ENCODE measurements at regions of chr6 and their contacts with region 1.

Region 1: DNA sequence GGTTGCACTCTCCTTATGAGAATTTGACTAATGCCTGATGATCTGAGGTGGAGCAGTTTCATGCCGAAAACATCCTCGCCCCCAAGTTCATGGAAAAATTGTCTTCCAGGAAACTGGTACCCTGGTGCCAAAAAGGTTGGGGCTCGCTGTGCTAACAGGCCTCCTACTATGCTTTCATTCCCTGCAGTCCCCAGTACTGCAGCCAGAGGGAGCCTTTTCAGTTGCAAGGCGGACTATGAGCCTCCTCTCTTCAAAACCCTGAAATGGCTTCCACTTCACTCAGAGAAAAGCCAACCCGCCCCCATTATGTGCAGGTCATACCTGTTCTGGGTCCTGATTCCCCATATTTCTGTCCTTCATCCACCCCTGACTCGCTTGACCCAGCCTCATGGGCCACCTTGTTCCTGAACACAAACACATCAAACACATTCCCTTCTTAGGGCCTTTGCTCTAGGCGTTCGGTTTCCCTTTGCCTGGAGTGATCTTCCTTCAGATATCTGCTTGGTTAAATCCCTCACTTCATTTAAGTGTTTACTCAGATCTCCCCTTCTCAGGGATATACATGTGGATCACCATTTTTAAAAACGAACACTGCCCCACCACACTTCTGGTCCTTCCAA is 173.7 kb downstream of the PHACTR1 start:
- DNase-seq: peak in 1 of 2 donors; percentile 14
- ATAC-seq: no peak

Region 2: GRCh38 chr6:12637960-12638641 is 252.2 kb before region 1 on chr6:
- intact Hi-C with region 1: loop called in 1 of 2 experiments (anchors 10 kb)
- DNase-seq: peak in 1 of 2 donors; percentile 39
- ATAC-seq: peak; percentile 54